PC-3 (cell line): ENCODE measurements at regions of chr1 and their contacts with region 1.

Region 1: DNA sequence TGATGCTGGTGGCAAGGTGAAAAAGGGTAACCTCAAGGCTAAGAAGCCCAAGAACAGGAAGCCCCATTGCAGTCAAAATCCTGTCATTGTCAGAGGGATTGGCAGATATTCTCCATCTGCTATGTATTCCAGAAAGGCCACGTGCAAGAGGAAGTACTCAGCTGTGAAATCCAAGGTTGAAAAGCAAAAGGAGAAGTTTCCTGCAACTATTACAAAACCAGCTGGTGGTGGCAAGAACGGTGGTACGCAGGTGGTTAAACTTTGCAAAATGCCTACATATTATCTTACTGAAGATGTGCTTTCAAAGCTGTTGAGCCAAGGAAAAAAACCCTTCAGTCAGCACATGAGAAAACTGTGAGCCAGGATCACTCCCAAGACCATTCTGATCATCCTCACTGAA is 13.7 kb upstream of the VPS45 start:
- DNase-seq: no peak
- ATAC-seq: no peak
- H3K4me3 ChIP-seq: no peak overlapping the region
- H3K27ac ChIP-seq: no peak overlapping the region
- H3K4me1 ChIP-seq: peaks cover 12% of the 10 kb centered on the region
- H3K27me3 ChIP-seq: no peaks in the 10 kb centered on the region
- CTCF ChIP-seq: no peak

Region 2: DNA sequence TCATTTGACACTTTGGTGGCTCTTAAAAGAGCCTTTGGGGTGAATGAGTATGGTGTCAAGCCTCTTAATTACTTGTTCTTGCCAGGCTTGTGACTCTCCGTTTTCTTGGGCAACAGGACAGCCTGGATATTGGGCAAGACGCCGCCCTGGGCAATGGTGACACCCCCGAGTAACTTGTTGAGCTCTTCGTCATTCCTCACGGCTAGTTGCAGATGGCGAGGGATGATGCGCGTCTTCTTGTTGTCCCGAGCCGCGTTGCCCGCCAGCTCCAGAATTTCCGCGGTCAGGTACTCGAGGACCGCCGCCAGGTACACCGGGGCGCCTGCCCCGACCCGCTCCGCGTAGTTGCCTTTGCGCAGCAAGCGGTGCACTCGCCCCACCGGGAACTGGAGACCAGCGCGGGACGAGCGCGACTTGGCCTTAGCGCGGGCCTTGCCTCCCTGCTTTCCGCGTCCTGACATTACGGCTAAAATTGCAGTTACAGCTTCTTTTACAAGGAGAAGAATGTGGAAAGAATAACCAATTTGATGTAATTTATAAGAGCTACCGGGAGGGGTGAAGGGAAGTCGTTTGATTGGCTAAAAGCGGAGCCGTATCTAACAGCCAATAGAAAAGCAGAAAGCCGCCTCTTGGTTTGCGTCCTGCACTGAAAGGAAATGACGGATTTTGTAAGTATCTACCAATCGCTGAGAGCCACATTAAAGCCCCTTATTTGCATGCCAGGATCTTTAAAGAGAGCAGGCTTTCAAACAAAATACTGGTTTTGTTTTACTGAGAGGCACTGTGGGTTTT is 166.3 kb before region 1 on chr1:
- CTCF ChIA-PET with region 1: interaction called, 3 read pairs
- POLR2A ChIA-PET with region 1: no interaction called
- intact Hi-C with region 1: loop called (anchors 1 kb)
- DNase-seq: peak; percentile 99
- ATAC-seq: peak; percentile 55
- H3K4me3 ChIP-seq: peak overlapping the region; percentile 77
- H3K27ac ChIP-seq: peak overlapping the region; percentile 93
- H3K4me1 ChIP-seq: peaks cover 27% of the 10 kb centered on the region
- H3K27me3 ChIP-seq: no peaks in the 10 kb centered on the region
- CTCF ChIP-seq: no peak

Region 3: GRCh38 chr1:149899460-149900293 is 154.2 kb before region 1 on chr1 and contains the start of gene BOLA1:
- CTCF ChIA-PET with region 1: no interaction called
- POLR2A ChIA-PET with region 1: no interaction called
- intact Hi-C with region 1: no loop called
- DNase-seq: peak; percentile 94
- ATAC-seq: peak; percentile 98
- H3K4me3 ChIP-seq: peak within 1 kb of the TSS; percentile 68
- H3K27ac ChIP-seq: peak within 1 kb of the TSS; percentile 15; the same call in 1 of the 2 replicates
- H3K4me1 ChIP-seq: peaks cover 7% of the 10 kb centered on the region; the same call in 1 of the 2 replicates
- H3K27me3 ChIP-seq: no peaks in the 10 kb centered on the region
- CTCF ChIP-seq: no peak
- total RNA-seq, gene BOLA1: 27.6 and 38.6 TPM in 2 replicates

Region 4: GRCh38 chr1:149997585-149998262 is 56.2 kb before region 1 on chr1:
- CTCF ChIA-PET with region 1: interaction called, 4 read pairs
- POLR2A ChIA-PET with region 1: no interaction called
- intact Hi-C with region 1: loop called (anchors 5 kb)
- DNase-seq: no peak
- ATAC-seq: no peak
- H3K4me3 ChIP-seq: no peak overlapping the region
- H3K27ac ChIP-seq: no peak overlapping the region; the same call in 1 of the 2 replicates
- H3K4me1 ChIP-seq: peaks cover 35% of the 10 kb centered on the region
- H3K27me3 ChIP-seq: no peaks in the 10 kb centered on the region
- CTCF ChIP-seq: no peak

Region 5: GRCh38 chr1:150010393-150011115 is 43.4 kb before region 1 on chr1 and contains the start of gene OTUD7B:
- CTCF ChIA-PET with region 1: no interaction called
- POLR2A ChIA-PET with region 1: no interaction called
- intact Hi-C with region 1: loop called (anchors 2 kb)
- DNase-seq: peak; percentile 94
- ATAC-seq: peak; percentile 66
- H3K4me3 ChIP-seq: peak within 1 kb of the TSS; percentile 99
- H3K27ac ChIP-seq: peak within 1 kb of the TSS; percentile 84
- H3K4me1 ChIP-seq: peaks cover 41% of the 10 kb centered on the region
- H3K27me3 ChIP-seq: no peaks in the 10 kb centered on the region
- CTCF ChIP-seq: no peak
- total RNA-seq, gene OTUD7B: 11.5 and 14.6 TPM in 2 replicates

Region 6: GRCh38 chr1:150529017-150529416 is 475.1 kb after region 1 on chr1:
- CTCF ChIA-PET with region 1: no interaction called
- POLR2A ChIA-PET with region 1: no interaction called
- intact Hi-C with region 1: no loop called
- DNase-seq: no peak
- ATAC-seq: peak; percentile 57
- H3K4me3 ChIP-seq: no peak overlapping the region
- H3K27ac ChIP-seq: no peak overlapping the region
- H3K4me1 ChIP-seq: peaks cover 13% of the 10 kb centered on the region; the same call in 1 of the 2 replicates
- H3K27me3 ChIP-seq: no peaks in the 10 kb centered on the region
- CTCF ChIP-seq: no peak